Activated CD4-positive, alpha-beta T cell treated with anti-CD3 and anti-CD28 coated beads for 36 hours (primary cell): ENCODE measurements at regions of chr1 and their contacts with region 1.

Region 1: GRCh38 chr1:26200413-26200812 is 10.0 kb downstream of the CATSPER4 start:
- DNase-seq: no peak
- ATAC-seq: no peak
- H3K4me3 Mint-ChIP-seq: no peak overlapping the region
- H3K27ac Mint-ChIP-seq: peak overlapping the region; percentile 73
- H3K4me1 Mint-ChIP-seq: peaks cover 25% of the 10 kb centered on the region
- H3K27me3 Mint-ChIP-seq: no peaks in the 10 kb centered on the region

Region 2: DNA sequence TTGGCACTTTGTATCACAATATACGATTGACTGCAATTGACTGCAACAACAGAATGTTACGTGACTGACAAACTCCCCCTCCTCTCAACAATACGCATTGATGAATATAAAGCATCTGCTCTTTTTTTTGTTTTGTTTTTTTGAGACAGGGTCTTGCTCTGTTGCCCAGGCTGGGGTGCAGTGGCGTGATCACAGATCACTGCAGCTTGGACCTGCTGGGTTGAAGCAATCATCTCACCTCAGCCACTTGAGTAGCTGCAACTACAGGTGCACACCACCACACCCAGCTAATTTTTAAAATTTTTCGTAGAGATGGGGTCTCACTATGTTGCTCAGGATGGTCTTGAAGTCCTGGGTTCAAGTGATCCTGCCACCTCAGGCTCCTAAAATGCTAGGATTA is 12.3 kb after region 1 on chr1:
- CTCF ChIA-PET with region 1: interaction called, 3 read pairs
- POLR2A ChIA-PET with region 1: interaction called, 10 read pairs
- intact Hi-C with region 1: no loop called
- DNase-seq: no peak
- ATAC-seq: no peak
- H3K4me3 Mint-ChIP-seq: no peak overlapping the region
- H3K27ac Mint-ChIP-seq: no peak overlapping the region
- H3K4me1 Mint-ChIP-seq: no peaks in the 10 kb centered on the region
- H3K27me3 Mint-ChIP-seq: no peaks in the 10 kb centered on the region